T-cell (primary cell): ENCODE measurements at regions of chr11 and their contacts with region 1.

Region 1: GRCh38 chr11:64947208-64947814 is 11.6 kb upstream of the GPHA2 start:
- DNase-seq: no peak
- ATAC-seq: no peak
- H3K4me3 ChIP-seq: no peak overlapping the region
- H3K4me3 Mint-ChIP-seq: no peak overlapping the region
- H3K27ac ChIP-seq: no peak overlapping the region
- H3K27ac Mint-ChIP-seq: no peak overlapping the region
- H3K4me1 ChIP-seq: no peaks in the 10 kb centered on the region
- H3K4me1 Mint-ChIP-seq: no peaks in the 10 kb centered on the region
- H3K27me3 ChIP-seq: peaks cover 0 to 10% of the 10 kb centered on the region in 2 experiments
- H3K27me3 Mint-ChIP-seq: peaks cover 6% of the 10 kb centered on the region in 2 donors

Region 2: DNA sequence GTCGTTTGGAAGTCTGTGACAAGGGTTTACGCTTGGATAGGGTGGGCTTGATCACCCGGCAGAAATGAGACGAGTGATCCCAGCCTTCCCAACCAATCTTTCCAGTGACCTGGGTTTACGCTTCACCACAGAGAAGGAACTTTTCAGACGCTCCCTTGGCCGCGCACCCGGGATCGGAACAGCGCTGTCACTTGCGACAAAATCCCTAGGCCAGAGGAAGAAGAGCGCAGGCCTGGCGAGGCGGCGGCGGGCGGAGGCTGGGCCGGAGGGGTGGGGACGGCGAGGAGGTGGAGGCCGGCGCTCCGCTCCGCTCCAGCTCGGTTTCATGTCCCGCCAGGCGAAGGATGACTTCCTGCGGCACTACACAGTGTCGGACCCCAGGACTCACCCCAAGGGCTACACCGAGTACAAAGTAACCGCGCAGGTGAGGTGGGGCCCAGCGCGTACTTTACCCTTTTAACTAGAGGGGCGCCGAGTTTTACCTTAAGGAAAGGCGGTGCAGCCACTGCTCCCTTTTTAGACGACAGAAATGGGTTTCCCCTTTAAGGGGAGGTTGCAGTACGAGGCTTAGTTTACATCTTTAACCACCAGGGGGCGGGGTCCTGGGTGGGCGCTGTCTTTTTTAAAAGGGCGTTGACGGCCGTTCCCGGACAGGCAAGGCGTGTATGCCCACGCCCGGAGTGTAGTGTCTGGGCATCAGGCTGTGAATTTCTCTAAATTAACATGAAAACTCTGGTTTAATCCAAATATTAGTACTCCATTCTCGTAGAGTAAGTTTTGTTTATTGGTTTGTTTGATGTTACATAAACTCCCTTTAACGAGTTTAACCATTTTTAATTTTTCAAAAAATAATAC is 80.1 kb after region 1 on chr11 and contains the start of gene SNX15:
- CTCF ChIA-PET with region 1: no interaction called
- POLR2A ChIA-PET with region 1: interaction called in 1 of 2 experiments, 10 read pairs
- DNase-seq: peak; percentile 72 to 95 (median 85)
- ATAC-seq: peak; percentile 91 to 94 (median 91)
- H3K4me3 ChIP-seq: peak within 1 kb of the TSS; percentile 27 to 53
- H3K4me3 Mint-ChIP-seq: peak within 1 kb of the TSS; percentile 68 to 86 (median 83)
- H3K27ac ChIP-seq: peak within 1 kb of the TSS; percentile 70
- H3K27ac Mint-ChIP-seq: peak within 1 kb of the TSS; percentile 90 to 91
- H3K4me1 ChIP-seq: peaks cover 5 to 24% of the 10 kb centered on the region in 2 experiments
- H3K4me1 Mint-ChIP-seq: peaks cover 19 to 24% (median 21%) of the 10 kb centered on the region in 3 donors
- H3K27me3 ChIP-seq: no peaks in the 10 kb centered on the region
- H3K27me3 Mint-ChIP-seq: no peaks in the 10 kb centered on the region
- total RNA-seq, gene SNX15: 19.6 to 28.6 (median 25.4) TPM